ENCODE measurements at regions of chr6 and their contacts with region 1.

Region 1: DNA sequence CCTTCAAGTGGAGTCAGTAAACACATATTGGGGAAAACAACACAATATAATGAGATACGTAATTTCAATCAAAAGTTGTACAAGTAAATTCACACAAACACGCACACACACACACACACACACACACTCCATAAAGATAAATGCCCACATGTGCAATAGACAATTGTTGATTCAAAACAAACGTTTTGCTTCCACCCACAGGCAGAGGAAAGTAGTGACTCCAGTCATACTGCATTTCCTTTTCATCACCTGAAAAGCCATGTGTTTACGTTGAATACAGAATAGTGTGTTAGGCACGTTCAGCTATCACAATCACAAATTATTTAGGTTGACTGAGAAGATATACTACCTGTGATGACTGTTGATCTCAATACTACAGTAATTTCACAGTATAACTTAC is 443.8 kb upstream of the MANEA start:
- DNase-seq: peak; percentile 51
- H3K4me3 ChIP-seq: no peak overlapping the region
- H3K27ac ChIP-seq: no peak overlapping the region
- H3K4me1 ChIP-seq: no peaks in the 10 kb centered on the region
- H3K27me3 ChIP-seq: no peaks in the 10 kb centered on the region
- CTCF ChIP-seq: peak; percentile 57 to 69

Region 2: DNA sequence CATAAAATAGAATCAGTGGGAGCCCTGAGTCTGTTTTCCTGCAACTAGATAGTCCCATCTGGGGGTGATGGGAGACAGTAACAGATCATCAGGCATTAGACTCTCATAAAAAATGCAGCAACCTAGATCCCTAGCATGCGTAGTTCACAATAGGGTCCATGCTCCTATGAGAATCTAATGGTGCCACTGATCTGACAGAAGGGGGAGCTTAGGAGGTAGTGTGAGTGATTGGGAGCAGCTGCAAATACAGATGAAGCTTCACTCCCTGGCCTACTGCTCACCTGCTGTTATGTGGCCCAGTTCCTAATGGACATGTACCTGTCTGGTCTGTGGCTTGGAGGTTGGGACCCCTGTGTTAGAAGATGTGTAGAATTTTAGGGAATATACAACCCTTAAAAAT is 809.7 kb before region 1 on chr6:
- CTCF ChIA-PET with region 1: no interaction called
- dilution Hi-C with region 1: no loop called
- in situ Hi-C with region 1: no loop called
- intact Hi-C with region 1: loop called (anchors 10 kb)
- DNase-seq: no peak
- H3K4me3 ChIP-seq: no peak overlapping the region
- H3K27ac ChIP-seq: no peak overlapping the region
- H3K4me1 ChIP-seq: no peaks in the 10 kb centered on the region
- H3K27me3 ChIP-seq: no peaks in the 10 kb centered on the region
- CTCF ChIP-seq: peak in 1 of 2 donors; percentile 43

Region 3: DNA sequence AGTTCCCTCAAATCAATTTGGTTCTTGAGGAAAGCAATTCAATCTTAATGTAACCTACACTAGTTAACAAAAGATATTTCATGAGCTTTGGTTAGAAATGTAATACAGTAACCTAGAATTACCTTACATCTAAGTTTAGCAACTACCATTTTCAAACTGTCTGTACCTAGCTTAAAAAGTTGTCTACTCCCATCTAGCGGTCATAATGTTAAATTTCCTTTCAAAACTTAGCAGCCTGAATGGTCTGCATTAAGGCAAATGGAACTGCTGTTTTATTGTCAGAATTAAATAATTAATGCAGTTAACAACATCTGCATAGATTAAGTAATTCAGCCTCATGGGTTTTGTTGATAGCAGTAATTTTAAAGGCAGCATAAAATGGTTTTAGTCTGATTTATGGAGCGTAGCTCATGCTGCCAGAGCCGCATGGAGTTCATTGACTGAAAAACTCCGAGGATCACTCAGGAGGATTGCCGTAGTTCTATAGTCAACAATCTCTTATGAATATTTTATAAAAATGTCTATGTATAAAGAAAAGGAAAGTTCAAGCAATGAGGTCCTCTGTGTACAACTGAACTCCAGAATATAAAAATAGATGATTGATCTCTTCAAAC is 41.6 kb before region 1 on chr6:
- CTCF ChIA-PET with region 1: no interaction called
- dilution Hi-C with region 1: no loop called
- in situ Hi-C with region 1: no loop called
- intact Hi-C with region 1: loop called (anchors 1 kb)
- DNase-seq: peak; percentile 48
- H3K4me3 ChIP-seq: no peak overlapping the region
- H3K27ac ChIP-seq: peak overlapping the region; percentile 50
- H3K4me1 ChIP-seq: peaks cover 31% of the 10 kb centered on the region
- H3K27me3 ChIP-seq: no peaks in the 10 kb centered on the region
- CTCF ChIP-seq: peak; percentile 58 to 59

Region 4: DNA sequence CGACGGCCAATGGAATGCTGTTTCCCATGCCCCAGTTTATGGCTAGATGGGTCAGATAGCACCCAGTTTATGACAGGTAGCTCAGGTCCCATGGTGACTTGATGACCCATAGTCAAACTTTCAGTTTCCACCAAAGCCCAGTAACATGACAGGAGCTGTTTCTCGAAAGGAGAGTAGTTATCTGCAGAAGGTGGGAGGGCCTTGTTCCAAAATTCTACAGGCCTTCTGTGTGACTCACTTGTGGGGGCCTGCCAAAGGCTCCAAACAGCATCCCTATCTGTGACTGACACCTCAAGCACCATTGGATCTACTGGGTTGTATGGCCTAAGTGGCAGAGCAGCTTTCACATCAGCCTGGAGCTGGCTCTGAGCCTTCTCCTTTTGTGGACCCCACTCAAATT is 64.0 kb after region 1 on chr6:
- CTCF ChIA-PET with region 1: no interaction called
- dilution Hi-C with region 1: no loop called
- in situ Hi-C with region 1: no loop called
- intact Hi-C with region 1: no loop called
- DNase-seq: no peak
- H3K4me3 ChIP-seq: no peak overlapping the region
- H3K27ac ChIP-seq: no peak overlapping the region
- H3K4me1 ChIP-seq: no peaks in the 10 kb centered on the region
- H3K27me3 ChIP-seq: no peaks in the 10 kb centered on the region
- CTCF ChIP-seq: no peak

Measured in mammary epithelial cell (primary cell).